Left ventricle myocardium superior (tissue), 1 donor: ENCODE measurements at regions of chr17 and their contacts with region 1.

Region 1: DNA sequence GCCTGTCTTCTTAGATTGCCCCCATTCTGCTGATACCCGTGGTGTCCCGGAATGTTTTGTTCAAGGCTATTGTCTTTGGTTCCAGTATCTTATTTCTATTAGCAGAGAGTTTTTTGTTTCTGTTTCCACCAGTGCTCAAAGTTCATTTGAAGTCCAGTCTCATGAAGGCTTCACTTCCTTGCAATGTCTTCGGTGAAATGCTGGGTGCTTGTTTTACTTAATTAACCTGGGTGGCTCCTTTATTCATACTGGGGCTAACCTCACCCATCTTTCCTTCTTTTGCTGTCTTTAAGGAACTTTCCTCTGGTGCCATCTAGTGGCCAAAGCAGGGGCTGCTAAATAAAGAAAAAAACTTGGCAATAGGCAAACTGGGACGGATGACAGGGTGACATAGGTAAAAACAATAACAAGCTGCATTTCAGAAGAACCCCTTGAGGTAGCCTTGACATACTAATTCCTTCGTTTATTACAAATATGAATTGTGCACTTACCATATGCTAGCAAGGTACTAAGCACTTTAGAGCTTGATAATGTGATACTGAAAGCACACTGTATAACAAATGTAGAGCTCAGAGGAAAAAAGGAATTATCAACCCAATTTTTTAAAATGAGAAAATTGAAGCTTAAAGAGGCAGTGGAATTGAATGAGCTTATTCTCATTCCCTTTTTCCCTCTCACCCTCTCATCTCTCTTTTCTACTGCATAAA is 2.8 kb upstream of the SMIM36 start:
- DNase-seq: peak; percentile 67
- ATAC-seq: peak; percentile 67

Region 2: DNA sequence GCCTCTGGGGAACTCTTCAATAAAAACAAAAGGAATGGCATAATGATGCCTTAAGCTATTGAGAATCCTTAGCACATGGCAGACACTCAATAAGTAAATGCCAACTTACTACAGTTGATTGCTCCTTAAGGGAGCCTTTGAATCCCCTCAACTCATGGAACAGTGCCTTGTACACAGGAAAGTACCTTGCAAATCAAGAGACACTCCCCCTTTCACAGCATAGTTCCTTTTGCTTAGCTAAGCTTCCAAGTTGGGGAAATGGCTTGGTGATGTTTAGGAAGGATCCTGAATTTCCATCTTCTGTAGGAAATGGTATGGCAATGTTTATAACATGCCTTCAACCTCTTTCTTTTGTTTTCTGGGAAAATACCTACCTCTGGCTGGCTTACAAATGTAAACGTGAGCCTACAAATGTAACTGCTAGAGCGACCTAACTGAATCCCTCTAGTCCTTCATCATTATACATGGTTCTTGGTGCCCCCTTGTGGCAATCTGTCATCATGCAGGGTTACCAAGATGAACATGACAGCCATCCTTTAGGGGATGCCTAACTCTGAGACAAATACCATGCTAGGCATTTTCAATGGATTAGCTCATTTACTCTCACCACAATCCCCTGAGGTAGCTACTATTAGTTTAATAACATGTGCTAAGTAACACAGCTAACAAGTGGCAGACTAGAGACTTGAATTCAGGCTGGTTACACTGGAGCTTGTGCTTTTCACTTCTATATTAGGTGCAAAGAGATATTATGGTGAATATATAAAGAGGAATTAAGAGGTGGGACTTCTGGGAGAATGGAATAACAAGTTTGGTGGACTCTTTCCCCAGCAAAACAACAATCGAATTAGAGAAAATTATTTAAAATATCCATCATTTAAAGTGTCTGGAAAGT is 157.4 kb before region 1 on chr17:
- intact Hi-C with region 1: loop called (anchors 5 kb)
- DNase-seq: peak; percentile 50
- ATAC-seq: peak; percentile 82

Region 3: DNA sequence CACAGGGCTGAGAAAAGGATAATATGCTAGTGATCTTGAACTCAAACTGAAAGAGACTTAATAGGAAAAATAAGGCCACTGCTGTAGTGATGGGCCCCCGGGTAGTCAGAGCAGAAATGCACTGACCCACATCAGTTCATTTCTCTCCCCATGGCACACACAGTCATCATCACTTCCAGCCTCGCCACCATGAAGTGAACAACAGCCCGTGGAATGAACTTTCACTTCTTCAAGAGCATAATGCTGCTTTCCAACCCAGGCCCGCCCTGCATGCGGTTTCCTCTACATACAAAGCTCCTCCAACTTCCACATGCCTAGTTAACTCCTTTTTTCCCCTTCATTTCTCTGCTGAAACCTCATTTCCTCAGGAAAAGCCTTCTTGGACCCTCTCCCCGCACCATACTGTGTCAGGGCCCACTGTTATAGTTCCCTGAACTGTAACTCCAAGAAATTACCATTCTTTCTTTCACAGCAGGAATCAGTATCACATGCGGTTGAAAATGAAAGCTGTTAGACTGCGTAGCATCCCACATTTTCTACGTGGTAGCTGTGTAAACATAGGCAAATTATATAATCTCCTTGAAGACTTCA is 63.1 kb after region 1 on chr17:
- intact Hi-C with region 1: no loop called
- DNase-seq: peak; percentile 62
- ATAC-seq: peak; percentile 84